ENCODE measurements at regions of chr14 and their contacts with region 1.

Region 1: DNA sequence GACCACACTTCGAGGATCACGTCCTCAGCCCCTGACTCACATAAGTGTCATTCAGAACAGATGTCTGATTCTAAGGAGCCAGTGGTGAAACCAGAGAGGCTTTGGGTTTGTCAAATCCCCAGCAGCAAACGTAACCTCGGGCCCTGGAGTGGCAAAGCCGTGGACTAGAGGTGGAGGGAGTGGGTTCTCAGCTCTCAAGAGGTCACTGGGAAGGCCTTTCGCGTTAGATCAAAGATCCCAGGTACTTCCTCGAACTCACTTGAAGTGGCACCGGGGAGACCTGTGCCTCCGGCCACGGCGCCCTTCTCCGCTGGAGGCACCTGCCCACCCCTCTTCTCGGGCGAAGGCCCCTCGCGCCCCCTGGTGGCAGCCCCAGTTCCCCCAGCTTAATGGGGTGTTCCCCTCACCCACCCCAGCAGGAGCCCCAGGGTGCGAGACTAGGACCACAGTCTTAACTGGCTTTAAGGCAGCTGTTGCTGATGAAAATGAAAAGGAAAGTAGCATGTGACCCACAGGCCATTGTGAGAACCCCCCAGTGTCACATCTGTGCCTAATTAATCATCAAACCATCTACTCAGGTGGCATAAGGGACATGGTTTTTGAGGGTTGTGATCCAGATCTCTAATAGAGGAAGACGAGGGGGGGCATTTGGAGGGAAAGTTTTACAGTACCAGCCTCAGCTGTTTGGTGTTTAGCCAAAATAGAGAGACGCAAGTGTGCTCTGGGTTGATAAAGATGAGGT is 672 bp upstream of the ESR2 start:
- DNase-seq: peak; percentile 78
- ATAC-seq: peak; percentile 84
- H3K4me3 ChIP-seq: peak overlapping the region; percentile 66
- H3K27ac ChIP-seq: no peak overlapping the region
- H3K4me1 ChIP-seq: peaks cover 16% of the 10 kb centered on the region; the same call in 1 of the 2 replicates
- H3K27me3 ChIP-seq: no peaks in the 10 kb centered on the region
- CTCF ChIP-seq: peak; percentile 97

Region 2: GRCh38 chr14:63454863-63455622 is 839.8 kb before region 1 on chr14:
- CTCF ChIA-PET with region 1: no interaction called
- POLR2A ChIA-PET with region 1: no interaction called
- intact Hi-C with region 1: no loop called
- DNase-seq: peak; percentile 40
- ATAC-seq: peak; percentile 47
- H3K4me3 ChIP-seq: no peak overlapping the region
- H3K27ac ChIP-seq: no peak overlapping the region
- H3K4me1 ChIP-seq: no peaks in the 10 kb centered on the region
- H3K27me3 ChIP-seq: no peaks in the 10 kb centered on the region
- CTCF ChIP-seq: no peak

Region 3: DNA sequence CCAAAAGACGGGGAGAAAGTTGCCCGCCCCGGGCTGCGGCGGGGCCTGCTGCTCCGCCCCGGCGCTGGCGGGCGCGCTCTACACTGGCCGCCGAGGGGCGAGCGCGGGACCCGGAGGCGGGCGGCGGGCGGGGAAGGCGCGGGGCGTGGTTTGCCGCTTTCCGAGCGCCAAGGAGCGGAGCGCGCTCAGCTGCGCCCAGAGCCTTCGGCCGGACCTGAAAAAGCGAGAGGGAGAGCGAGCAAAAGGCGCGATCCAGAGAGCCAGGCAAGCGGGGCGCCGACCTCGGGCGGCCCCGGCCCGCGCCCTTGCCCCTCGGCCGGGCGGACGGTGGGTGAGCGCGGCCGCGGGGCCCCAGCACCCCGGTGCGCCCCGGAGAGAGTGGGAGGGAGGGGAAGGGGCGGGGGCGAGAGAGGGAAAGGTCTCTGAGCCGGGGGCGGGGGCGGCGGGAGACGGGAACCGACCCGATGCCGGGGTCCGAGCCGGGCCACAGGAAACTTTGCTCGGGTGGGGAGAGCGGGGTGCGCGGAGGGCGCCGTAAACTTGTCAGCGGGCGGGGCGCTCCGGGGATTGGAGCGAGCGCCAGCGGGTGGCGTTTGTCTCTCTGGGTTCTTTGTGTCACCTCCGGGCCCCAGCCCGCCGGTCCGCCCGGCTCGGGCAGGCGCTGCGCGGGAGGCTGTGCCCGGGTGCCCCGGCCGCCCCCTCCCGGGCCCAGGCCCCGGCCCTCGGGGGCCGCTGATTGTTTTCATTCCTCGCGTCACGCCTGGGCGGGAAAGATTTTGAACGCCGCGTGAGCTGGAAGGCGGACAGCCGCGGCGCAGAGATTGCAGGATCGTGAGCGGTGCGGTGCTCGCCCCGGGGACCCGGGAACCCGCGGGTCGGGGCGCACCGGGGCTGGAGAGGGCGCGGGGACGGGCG is 441.8 kb before region 1 on chr14 and contains the start of gene SYNE2:
- CTCF ChIA-PET with region 1: no interaction called
- POLR2A ChIA-PET with region 1: no interaction called
- intact Hi-C with region 1: loop called (anchors 2 kb)
- DNase-seq: peak; percentile 82
- ATAC-seq: peak; percentile 86
- H3K4me3 ChIP-seq: peak within 1 kb of the TSS; percentile 71
- H3K27ac ChIP-seq: no peak within 1 kb of the TSS
- H3K4me1 ChIP-seq: peaks cover 12% of the 10 kb centered on the region
- H3K27me3 ChIP-seq: no peaks in the 10 kb centered on the region
- CTCF ChIP-seq: no peak
- total RNA-seq, gene SYNE2: 16.0 and 20.7 TPM in 2 replicates

Region 4: GRCh38 chr14:64040044-64040443 is 254.8 kb before region 1 on chr14:
- CTCF ChIA-PET with region 1: no interaction called
- POLR2A ChIA-PET with region 1: no interaction called
- intact Hi-C with region 1: loop called (anchors 1 kb)
- DNase-seq: peak; percentile 37
- ATAC-seq: 0 out of 2 replicates have a peak, but pooled peaks have one; percentile 19
- H3K4me3 ChIP-seq: no peak overlapping the region
- H3K27ac ChIP-seq: no peak overlapping the region
- H3K4me1 ChIP-seq: no peaks in the 10 kb centered on the region
- H3K27me3 ChIP-seq: no peaks in the 10 kb centered on the region
- CTCF ChIP-seq: peak; percentile 76

Region 5: DNA sequence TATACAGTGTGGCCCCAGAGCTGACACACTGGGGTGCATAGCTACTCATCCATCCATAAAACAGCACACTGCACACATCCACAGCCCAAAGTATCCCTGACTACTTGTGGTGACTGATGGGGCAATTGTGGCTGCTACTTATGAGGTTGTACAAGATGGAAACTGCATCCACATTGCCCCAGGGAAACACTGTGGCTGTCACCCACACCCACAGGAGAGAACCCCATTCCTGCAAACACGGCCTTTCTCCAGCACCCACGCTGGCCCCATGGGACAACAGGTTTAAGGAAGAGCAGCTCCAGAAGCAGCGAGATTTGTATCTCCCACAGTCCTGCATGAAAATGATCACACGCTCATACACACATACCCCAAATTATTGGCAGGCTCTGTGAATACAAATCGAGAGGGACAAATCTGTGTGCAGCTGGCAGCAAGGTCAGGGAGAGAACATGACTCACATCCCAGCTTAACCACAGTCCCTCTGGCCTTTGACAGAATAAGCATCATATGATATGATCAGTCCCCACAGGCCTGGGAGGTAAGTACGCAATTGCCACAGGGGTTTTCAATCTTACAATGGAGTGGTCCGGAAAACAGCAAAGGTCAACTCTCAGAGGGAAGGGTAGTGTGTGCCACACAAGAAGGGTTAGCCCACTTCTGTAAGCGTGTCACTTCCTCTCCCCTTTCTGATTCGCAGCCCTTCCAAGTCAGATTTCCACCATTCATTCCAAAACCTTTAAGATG is 62.6 kb before region 1 on chr14:
- CTCF ChIA-PET with region 1: interaction called, 3 read pairs
- POLR2A ChIA-PET with region 1: no interaction called
- intact Hi-C with region 1: loop called (anchors 5 kb)
- DNase-seq: peak; percentile 88
- ATAC-seq: peak; percentile 89
- H3K4me3 ChIP-seq: no peak overlapping the region
- H3K27ac ChIP-seq: peak overlapping the region; percentile 57
- H3K4me1 ChIP-seq: peaks cover 37% of the 10 kb centered on the region
- H3K27me3 ChIP-seq: no peaks in the 10 kb centered on the region
- CTCF ChIP-seq: no peak

Region 6: GRCh38 chr14:64421166-64421565 is 126.3 kb after region 1 on chr14:
- CTCF ChIA-PET with region 1: no interaction called
- POLR2A ChIA-PET with region 1: no interaction called
- intact Hi-C with region 1: no loop called
- DNase-seq: peak; percentile 89
- ATAC-seq: peak; percentile 96
- H3K4me3 ChIP-seq: no peak overlapping the region
- H3K27ac ChIP-seq: peak overlapping the region; percentile 44
- H3K4me1 ChIP-seq: peaks cover 14% of the 10 kb centered on the region
- H3K27me3 ChIP-seq: no peaks in the 10 kb centered on the region
- CTCF ChIP-seq: no peak